HEK293 (cell line): ENCODE measurements at regions of chr17 and their contacts with region 1.

Region 1: DNA sequence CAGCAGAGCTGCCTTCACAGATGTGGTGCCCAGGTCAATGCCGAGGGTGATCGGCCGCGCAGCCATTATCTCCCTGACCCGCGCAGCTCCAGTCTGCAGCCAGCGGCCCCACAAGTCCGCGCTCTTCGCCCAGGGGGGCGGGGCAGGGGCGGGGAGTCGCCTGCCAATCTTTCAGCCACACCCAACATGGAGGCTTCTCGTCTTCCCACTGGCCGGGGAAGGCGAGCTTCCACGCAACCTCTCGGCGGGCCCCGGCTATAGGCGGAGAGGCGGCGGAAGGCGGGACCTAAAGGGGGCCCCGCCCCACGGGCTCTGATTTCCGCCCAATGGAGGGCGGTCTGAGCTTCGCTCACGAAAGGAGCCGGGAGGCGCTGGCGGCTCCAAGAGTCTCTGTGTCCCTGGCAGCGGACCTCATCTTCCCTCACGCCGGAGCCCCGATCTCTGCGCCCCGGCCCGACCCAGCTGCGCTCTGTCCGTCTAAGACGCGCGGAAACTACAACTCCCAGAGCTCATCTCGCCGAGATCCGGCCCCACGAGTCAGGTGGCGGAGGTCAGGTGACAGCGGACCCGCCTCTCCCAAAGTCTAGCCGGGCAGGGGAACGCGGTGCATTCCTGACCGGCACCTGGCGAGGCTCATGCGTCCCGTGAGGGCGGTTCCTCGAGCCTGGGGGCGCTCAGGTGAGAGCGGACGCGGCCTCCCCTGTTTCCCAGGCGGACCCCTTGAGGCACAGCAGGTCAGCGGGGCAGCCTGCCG is at the starts of genes CTNS and SHPK:
- H3K4me3 ChIP-seq: peak within 1 kb of the TSS; percentile 96
- H3K27ac ChIP-seq: peak within 1 kb of the TSS; percentile 83
- H3K4me1 ChIP-seq: peaks cover 2% of the 10 kb centered on the region
- CTCF ChIP-seq: no peak

Region 2: DNA sequence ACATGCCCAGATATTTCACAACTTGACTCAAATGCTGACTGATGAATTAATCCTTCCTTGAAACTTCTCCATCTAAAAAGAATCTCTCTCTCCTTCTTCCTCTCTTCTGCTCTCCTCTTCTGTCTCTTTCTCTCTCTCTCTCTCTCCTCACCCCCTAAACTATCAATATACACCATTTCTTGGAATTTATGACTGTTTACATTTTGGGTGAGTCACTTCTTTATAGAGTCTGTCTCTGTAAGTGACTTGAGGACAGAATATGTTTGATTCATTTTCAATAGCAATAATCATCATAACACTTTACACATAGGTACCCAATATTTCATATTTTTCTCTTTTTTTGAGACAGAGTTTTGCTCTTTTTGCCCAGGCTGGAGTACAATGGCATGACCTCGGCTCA is 353.4 kb before region 1 on chr17:
- CTCF ChIA-PET with region 1: no interaction called
- POLR2A ChIA-PET with region 1: no interaction called
- H3K4me3 ChIP-seq: no peak overlapping the region
- H3K27ac ChIP-seq: no peak overlapping the region
- H3K4me1 ChIP-seq: no peaks in the 10 kb centered on the region
- CTCF ChIP-seq: no peak

Region 3: DNA sequence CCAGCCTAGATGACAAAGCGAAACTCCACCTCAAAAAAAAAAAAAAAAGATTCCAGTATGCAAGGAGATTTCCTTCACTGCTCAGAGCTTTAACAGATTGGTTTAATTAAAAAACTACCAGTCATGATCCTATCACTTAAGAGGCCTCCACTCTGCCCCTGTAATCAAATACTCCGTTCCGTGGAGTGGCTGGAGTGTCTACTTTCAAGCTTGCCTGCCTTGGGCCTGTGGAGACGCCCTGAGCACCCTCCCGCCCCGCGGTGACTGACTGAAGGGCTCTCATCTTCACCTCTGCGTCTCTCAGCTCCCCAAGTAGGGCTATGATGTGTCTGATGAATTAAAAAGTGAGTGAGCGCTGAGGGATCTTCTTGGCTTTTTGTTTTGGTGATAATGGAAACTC is 53.4 kb before region 1 on chr17:
- CTCF ChIA-PET with region 1: no interaction called
- POLR2A ChIA-PET with region 1: no interaction called
- H3K4me3 ChIP-seq: no peak overlapping the region
- H3K27ac ChIP-seq: no peak overlapping the region
- H3K4me1 ChIP-seq: no peaks in the 10 kb centered on the region
- CTCF ChIP-seq: no peak

Region 4: DNA sequence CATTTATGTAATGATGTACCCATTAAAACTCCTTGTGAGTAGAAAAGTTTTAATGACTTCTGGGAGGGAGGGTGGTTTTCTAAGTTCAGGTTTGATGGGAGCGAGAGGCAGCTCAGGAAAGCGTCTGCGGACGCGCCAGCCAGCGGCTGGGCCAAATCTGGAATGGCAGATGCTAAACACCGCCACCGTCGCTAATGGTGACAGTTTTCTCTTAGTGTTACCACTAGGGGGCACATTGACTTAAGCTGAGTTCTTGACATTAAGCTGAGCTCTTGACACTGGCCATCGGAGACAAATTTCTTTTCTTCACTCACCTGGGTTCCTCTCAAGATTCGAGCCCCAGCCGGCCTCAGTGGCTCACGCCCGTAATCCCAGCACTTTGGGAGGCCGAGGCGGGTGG is 33.8 kb before region 1 on chr17:
- CTCF ChIA-PET with region 1: interaction called, 8 read pairs
- POLR2A ChIA-PET with region 1: interaction called, 15 read pairs
- H3K4me3 ChIP-seq: no peak overlapping the region
- H3K27ac ChIP-seq: no peak overlapping the region
- H3K4me1 ChIP-seq: no peaks in the 10 kb centered on the region
- CTCF ChIP-seq: no peak

Region 5: GRCh38 chr17:3647769-3648555 is 11.6 kb after region 1 on chr17:
- CTCF ChIA-PET with region 1: interaction called, 5 read pairs
- POLR2A ChIA-PET with region 1: interaction called, 33 read pairs
- H3K4me3 ChIP-seq: no peak overlapping the region
- H3K27ac ChIP-seq: no peak overlapping the region
- H3K4me1 ChIP-seq: no peaks in the 10 kb centered on the region
- CTCF ChIP-seq: peak; percentile 78

Region 6: GRCh38 chr17:3659541-3660111 is 23.3 kb after region 1 on chr17:
- CTCF ChIA-PET with region 1: interaction called, 3 read pairs
- POLR2A ChIA-PET with region 1: interaction called, 26 read pairs
- H3K4me3 ChIP-seq: no peak overlapping the region
- H3K27ac ChIP-seq: 0 out of 2 replicates have a peak overlapping the region, but pooled peaks have one; percentile 16
- H3K4me1 ChIP-seq: no peaks in the 10 kb centered on the region
- CTCF ChIP-seq: no peak

Region 7: GRCh38 chr17:3668279-3669085 is 32.2 kb after region 1 on chr17 and contains the starts of genes EMC6 and TAX1BP3:
- CTCF ChIA-PET with region 1: interaction called, 4 read pairs
- POLR2A ChIA-PET with region 1: interaction called, 75 read pairs
- H3K4me3 ChIP-seq: peak within 1 kb of the TSS; percentile 90
- H3K27ac ChIP-seq: peak within 1 kb of the TSS; percentile 93
- H3K4me1 ChIP-seq: peaks cover 8% of the 10 kb centered on the region; the same call in 1 of the 2 replicates
- CTCF ChIP-seq: no peak

Region 8: DNA sequence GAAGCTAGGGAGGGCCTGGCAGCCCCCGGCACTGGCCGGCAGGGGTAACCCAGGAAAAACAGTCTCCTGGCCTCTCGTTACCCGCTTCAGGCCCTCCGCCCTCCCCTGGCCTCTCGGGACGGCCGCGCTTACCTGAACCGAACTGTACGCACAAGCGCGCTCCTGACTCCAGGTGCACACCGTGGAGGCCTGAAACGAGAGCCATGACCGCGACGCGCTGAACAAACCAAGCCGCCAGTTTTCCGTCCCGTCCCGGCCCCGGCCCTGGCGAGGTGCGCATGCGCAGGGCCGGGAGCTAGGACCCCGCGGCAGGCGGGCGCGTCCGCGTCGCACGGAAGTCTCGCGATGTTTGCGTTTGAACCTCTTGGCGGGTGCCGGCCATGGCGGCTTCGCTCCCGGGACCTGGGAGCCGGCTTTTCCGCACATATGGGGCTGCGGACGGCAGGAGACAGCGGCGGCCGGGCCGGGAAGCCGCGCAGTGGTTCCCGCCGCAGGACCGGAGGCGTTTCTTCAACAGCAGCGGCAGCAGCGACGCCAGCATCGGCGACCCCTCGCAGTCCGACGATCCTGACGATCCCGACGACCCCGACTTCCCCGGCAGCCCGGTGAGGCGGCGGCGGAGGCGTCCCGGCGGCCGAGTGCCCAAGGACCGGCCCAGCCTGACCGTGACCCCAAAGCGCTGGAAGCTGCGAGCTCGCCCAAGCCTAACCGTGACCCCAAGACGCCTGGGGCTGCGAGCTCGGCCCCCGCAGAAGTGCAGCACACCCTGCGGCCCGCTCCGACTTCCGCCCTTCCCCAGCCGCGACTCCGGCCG is 87.4 kb after region 1 on chr17 and contains the start of gene HASPIN:
- CTCF ChIA-PET with region 1: no interaction called
- POLR2A ChIA-PET with region 1: interaction called, 15 read pairs
- H3K4me3 ChIP-seq: peak within 1 kb of the TSS; percentile 94
- H3K27ac ChIP-seq: peak within 1 kb of the TSS; percentile 78
- H3K4me1 ChIP-seq: peaks cover 6% of the 10 kb centered on the region
- CTCF ChIP-seq: peak; percentile 81